PC-3 (cell line): ENCODE measurements at regions of chr21 and their contacts with region 1.

Region 1: GRCh38 chr21:41612674-41613532 is 104.9 kb upstream of the TMPRSS2 start:
- DNase-seq: peak; percentile 93
- ATAC-seq: peak; percentile 70
- H3K4me3 ChIP-seq: peak overlapping the region; percentile 34; the same call in 1 of the 2 replicates
- H3K27ac ChIP-seq: peak overlapping the region; percentile 86
- H3K4me1 ChIP-seq: peaks cover 52% of the 10 kb centered on the region
- H3K27me3 ChIP-seq: no peaks in the 10 kb centered on the region
- CTCF ChIP-seq: peak; percentile 67

Region 2: DNA sequence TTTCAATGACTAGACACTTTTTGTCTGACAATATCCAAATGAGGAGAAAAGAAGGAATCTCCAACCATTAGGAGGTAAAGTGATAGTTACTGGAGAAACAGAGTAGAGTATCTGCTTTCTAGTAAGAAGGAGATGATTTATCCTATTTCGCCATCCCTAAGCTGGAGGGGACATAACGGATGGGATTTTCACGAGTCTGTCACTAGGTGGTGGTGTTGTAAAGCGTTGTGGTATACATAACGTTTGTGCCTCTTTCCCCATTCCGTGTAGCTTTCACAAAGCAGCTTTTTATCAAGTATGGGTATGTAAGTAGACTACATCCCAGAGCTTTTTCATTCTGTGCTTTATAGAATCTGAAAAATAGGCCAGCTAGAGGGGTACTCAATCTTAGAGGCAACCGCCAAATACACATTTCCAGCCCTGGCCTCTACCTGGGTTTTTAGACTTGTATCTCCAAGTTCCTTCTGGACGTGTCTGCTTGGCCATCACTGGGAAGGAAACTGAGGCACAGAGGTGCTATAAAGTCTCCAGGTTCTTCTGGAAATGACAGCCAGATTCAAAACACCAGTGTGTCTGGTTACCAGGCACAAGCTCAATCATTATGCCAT is 329.6 kb before region 1 on chr21:
- CTCF ChIA-PET with region 1: interaction called, 8 read pairs
- POLR2A ChIA-PET with region 1: no interaction called
- intact Hi-C with region 1: loop called (anchors 5 kb)
- DNase-seq: peak; percentile 90
- ATAC-seq: peak; percentile 99
- H3K4me3 ChIP-seq: no peak overlapping the region
- H3K27ac ChIP-seq: no peak overlapping the region
- H3K4me1 ChIP-seq: no peaks in the 10 kb centered on the region
- H3K27me3 ChIP-seq: no peaks in the 10 kb centered on the region
- CTCF ChIP-seq: peak; percentile 92

Region 3: DNA sequence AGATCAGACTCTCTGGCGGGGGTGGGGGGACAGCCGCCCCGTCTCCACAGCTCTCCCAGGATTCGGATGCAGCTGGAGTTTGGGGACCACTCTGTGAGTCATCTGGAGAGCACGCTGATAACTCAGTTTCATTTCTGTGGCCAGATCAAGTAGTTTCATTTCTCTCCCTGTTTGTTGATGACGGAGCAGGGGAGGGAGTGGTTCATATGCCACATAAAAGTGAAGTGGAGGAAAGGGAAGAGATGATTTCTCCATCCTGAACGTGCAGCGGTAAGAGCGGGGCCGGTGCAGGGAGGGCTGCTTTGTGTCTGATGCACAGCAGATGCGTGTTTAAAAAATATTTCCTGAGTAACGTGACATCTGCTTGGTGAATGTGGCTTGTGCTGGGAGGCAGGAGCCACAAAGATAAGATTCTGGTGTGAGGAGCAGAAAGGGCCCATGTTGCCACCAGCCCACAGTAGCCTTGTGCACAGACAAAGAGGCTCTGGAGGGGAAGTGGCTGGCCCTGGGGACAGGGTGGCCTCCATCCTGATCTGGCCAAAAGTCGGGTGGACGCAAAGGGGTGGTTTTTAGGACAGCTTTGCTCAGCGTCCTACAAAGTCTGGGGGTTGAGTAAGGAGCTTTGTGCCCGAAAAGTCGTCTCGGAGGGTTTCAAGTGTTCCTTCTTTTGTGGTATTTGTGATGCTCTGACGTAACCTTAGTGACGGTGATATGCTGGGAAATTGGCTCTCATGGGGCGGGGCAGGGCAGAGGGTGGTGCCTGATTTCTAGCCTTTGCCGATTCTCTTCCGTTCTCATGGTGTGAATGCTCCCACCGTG is 250.9 kb before region 1 on chr21 and contains the start of gene MX2:
- CTCF ChIA-PET with region 1: no interaction called
- POLR2A ChIA-PET with region 1: no interaction called
- intact Hi-C with region 1: no loop called
- DNase-seq: peak; percentile 48
- ATAC-seq: peak; percentile 25
- H3K4me3 ChIP-seq: peak within 1 kb of the TSS; percentile 25; the same call in 1 of the 2 replicates
- H3K27ac ChIP-seq: no peak within 1 kb of the TSS
- H3K4me1 ChIP-seq: peaks cover 9% of the 10 kb centered on the region
- H3K27me3 ChIP-seq: peaks cover 4% of the 10 kb centered on the region
- CTCF ChIP-seq: no peak
- total RNA-seq, gene MX2: 0.15 and 0.46 TPM in 2 replicates

Region 4: GRCh38 chr21:41425954-41426675 is 186.8 kb before region 1 on chr21 and contains the start of gene MX1:
- CTCF ChIA-PET with region 1: no interaction called
- POLR2A ChIA-PET with region 1: no interaction called
- intact Hi-C with region 1: no loop called
- DNase-seq: peak; percentile 55
- ATAC-seq: peak; percentile 92
- H3K4me3 ChIP-seq: peak within 1 kb of the TSS; percentile 82
- H3K27ac ChIP-seq: 0 out of 2 replicates have a peak within 1 kb of the TSS, but pooled peaks have one; percentile 5
- H3K4me1 ChIP-seq: peaks cover 4% of the 10 kb centered on the region
- H3K27me3 ChIP-seq: no peaks in the 10 kb centered on the region
- CTCF ChIP-seq: no peak
- total RNA-seq, gene MX1: 12.6 and 22.0 TPM in 2 replicates

Region 5: GRCh38 chr21:41559658-41560631 is 53.0 kb before region 1 on chr21:
- CTCF ChIA-PET with region 1: no interaction called
- POLR2A ChIA-PET with region 1: no interaction called
- intact Hi-C with region 1: no loop called
- DNase-seq: no peak
- ATAC-seq: no peak
- H3K4me3 ChIP-seq: no peak overlapping the region
- H3K27ac ChIP-seq: no peak overlapping the region
- H3K4me1 ChIP-seq: 0 out of 2 replicates have a peak, but pooled peaks cover under 1% of the 10 kb centered on the region
- H3K27me3 ChIP-seq: no peaks in the 10 kb centered on the region
- CTCF ChIP-seq: no peak

Region 6: GRCh38 chr21:41622831-41623548 is 10.1 kb after region 1 on chr21:
- CTCF ChIA-PET with region 1: no interaction called
- POLR2A ChIA-PET with region 1: no interaction called
- intact Hi-C with region 1: no loop called
- DNase-seq: peak; percentile 51
- ATAC-seq: peak; percentile 68
- H3K4me3 ChIP-seq: no peak overlapping the region
- H3K27ac ChIP-seq: peak overlapping the region; percentile 49
- H3K4me1 ChIP-seq: peaks cover 17% of the 10 kb centered on the region
- H3K27me3 ChIP-seq: no peaks in the 10 kb centered on the region
- CTCF ChIP-seq: no peak

Region 7: GRCh38 chr21:41663801-41664788 is 51.2 kb after region 1 on chr21:
- CTCF ChIA-PET with region 1: interaction called, 3 read pairs
- POLR2A ChIA-PET with region 1: no interaction called
- intact Hi-C with region 1: loop called (anchors 5 kb)
- DNase-seq: peak; percentile 63
- ATAC-seq: peak; percentile 60
- H3K4me3 ChIP-seq: no peak overlapping the region; the same call in 1 of the 2 replicates
- H3K27ac ChIP-seq: peak overlapping the region; percentile 89
- H3K4me1 ChIP-seq: peaks cover 34% of the 10 kb centered on the region
- H3K27me3 ChIP-seq: no peaks in the 10 kb centered on the region
- CTCF ChIP-seq: no peak

Region 8: DNA sequence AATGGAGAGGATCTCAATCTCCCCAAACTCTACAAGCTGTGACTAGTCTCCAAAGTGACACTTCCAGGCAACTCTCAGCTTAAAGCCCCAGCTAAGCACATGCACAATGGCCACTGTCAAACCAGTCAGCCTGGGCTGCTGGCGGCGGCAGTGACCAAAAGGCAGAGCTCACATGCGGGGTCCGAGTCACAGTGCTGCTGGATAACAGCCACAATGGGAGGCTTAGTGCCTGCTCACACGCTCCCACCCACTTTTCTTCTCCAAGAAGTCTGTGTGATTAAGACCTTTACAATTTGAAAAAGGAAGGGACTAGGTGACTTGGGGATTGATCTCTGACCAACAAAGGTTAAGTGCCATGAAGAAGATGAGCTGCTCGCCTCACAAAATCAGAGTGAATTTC is 137.1 kb after region 1 on chr21:
- CTCF ChIA-PET with region 1: interaction called, 16 read pairs
- POLR2A ChIA-PET with region 1: interaction called, 8 read pairs
- intact Hi-C with region 1: no loop called
- DNase-seq: peak; percentile 50
- ATAC-seq: no peak
- H3K4me3 ChIP-seq: no peak overlapping the region
- H3K27ac ChIP-seq: no peak overlapping the region
- H3K4me1 ChIP-seq: peaks cover 48% of the 10 kb centered on the region
- H3K27me3 ChIP-seq: no peaks in the 10 kb centered on the region
- CTCF ChIP-seq: no peak

Region 9: GRCh38 chr21:41777951-41778874 is 165.3 kb after region 1 on chr21:
- CTCF ChIA-PET with region 1: interaction called, 47 read pairs
- POLR2A ChIA-PET with region 1: no interaction called
- intact Hi-C with region 1: loop called (anchors 1 kb)
- DNase-seq: peak; percentile 96
- ATAC-seq: peak; percentile 64
- H3K4me3 ChIP-seq: peak overlapping the region; percentile 41; the same call in 1 of the 2 replicates
- H3K27ac ChIP-seq: peak overlapping the region; percentile 97
- H3K4me1 ChIP-seq: peaks cover 54% of the 10 kb centered on the region
- H3K27me3 ChIP-seq: no peaks in the 10 kb centered on the region
- CTCF ChIP-seq: peak; percentile 85

Region 10: DNA sequence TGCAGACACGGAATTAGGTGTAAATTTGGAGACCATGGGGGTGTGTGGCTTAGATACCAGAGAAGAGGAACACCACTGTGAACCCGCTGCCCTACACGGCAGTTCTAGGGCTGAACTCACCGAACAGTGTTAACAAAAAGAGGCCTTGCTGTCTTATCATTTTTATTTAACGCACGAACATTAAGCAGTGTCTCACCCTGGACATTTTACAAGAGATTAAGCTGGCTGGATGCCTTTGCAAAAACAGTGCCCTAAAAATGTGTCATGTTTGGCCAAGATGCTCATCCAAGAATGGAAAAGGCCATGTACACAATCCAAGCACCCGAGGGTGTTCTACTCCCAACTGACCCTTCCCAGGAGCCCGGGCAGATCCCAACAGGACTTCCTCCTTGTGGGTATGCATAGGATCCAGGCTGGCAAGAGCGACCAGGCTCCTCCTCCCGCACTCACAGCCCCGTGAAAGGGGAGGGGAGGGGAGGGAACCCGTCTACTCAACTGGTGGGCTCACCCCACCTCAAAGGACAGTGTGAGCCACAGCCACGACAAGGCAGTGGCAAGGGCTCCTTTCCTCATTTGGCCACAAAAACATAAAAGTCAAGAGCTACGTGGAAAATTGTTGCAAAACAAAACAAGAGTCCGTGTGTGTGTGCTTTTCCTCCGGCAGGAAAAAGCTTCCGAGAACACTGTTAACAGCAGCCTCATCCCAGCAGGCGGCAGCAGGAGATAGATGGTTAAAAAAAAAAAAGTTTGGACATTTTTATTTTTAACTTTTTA is 320.6 kb after region 1 on chr21:
- CTCF ChIA-PET with region 1: interaction called, 7 read pairs
- POLR2A ChIA-PET with region 1: no interaction called
- intact Hi-C with region 1: loop called (anchors 1 kb)
- DNase-seq: peak; percentile 85
- ATAC-seq: peak; percentile 63
- H3K4me3 ChIP-seq: peak overlapping the region; percentile 63
- H3K27ac ChIP-seq: peak overlapping the region; percentile 90
- H3K4me1 ChIP-seq: peaks cover 42% of the 10 kb centered on the region
- H3K27me3 ChIP-seq: no peaks in the 10 kb centered on the region
- CTCF ChIP-seq: peak; percentile 70